Heart left ventricle (tissue), 16 donors: ENCODE measurements at regions of chr2 and their contacts with region 1.

Region 1: GRCh38 chr2:112433932-112434730 is 686 bp upstream of the RGPD8 start:
- DNase-seq: no peak
- ATAC-seq: no peak
- H3K4me3 ChIP-seq: no peak overlapping the region
- H3K27ac ChIP-seq: no peak overlapping the region
- H3K4me1 ChIP-seq: peaks cover 0 to 10% (median 1%) of the 10 kb centered on the region in 12 donors
- H3K27me3 ChIP-seq: peaks cover 0 to 10% (median 0%) of the 10 kb centered on the region in 9 donors
- CTCF ChIP-seq: no peak
- POLR2A ChIP-seq: no peak

Region 2: GRCh38 chr2:112259509-112260294 is 174.4 kb before region 1 on chr2:
- intact Hi-C with region 1: loop called in 4 of 10 experiments (anchors 5 to 10 kb)
- DNase-seq: peak; percentile 76 to 86 (median 84)
- ATAC-seq: peak; percentile 44 to 74 (median 67)
- H3K4me3 ChIP-seq: peak overlapping the region in 5 of 12 donors; percentile 14 to 32 (median 23)
- H3K27ac ChIP-seq: peak overlapping the region in 1 of 12 donors; percentile 37
- H3K4me1 ChIP-seq: peaks cover 0 to 22% (median 5%) of the 10 kb centered on the region in 12 donors
- H3K27me3 ChIP-seq: no peaks in the 10 kb centered on the region
- CTCF ChIP-seq: peak in 11 of 12 donors; percentile 87 to 98 (median 95)
- POLR2A ChIP-seq: no peak

Region 3: DNA sequence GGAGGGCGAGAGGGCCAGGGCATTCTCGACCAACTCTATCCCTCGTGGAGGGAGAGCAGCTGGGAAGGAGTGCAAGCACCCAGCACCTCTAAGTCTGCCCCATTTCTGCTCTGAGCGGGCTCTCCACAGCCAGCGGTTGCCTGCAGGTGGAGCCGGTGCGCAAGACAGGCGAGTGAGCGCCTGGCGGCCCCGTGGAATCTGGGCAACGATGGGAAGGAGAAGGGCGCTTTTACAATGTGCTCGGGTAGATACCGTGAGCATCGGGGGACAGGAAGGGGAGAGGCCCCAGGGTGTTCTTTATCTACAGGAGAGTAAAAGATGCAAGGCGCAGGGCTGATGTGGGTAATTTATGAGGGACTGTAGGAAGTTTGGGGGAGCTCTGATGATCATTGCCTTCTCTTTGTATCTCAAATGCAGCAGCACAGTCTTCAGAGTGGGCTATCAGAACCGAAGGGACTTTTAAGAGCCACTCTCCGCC is 47.0 kb after region 1 on chr2:
- intact Hi-C with region 1: no loop called
- DNase-seq: peak; percentile 83 to 92 (median 85)
- ATAC-seq: peak; percentile 85 to 93 (median 88)
- H3K4me3 ChIP-seq: peak overlapping the region; percentile 57 to 95 (median 72)
- H3K27ac ChIP-seq: peak overlapping the region; percentile 29 to 92 (median 88)
- H3K4me1 ChIP-seq: peaks cover 0 to 27% (median 19%) of the 10 kb centered on the region in 12 donors
- H3K27me3 ChIP-seq: no peaks in the 10 kb centered on the region
- CTCF ChIP-seq: peak; percentile 68 to 91 (median 78)
- POLR2A ChIP-seq: no peak

Region 4: DNA sequence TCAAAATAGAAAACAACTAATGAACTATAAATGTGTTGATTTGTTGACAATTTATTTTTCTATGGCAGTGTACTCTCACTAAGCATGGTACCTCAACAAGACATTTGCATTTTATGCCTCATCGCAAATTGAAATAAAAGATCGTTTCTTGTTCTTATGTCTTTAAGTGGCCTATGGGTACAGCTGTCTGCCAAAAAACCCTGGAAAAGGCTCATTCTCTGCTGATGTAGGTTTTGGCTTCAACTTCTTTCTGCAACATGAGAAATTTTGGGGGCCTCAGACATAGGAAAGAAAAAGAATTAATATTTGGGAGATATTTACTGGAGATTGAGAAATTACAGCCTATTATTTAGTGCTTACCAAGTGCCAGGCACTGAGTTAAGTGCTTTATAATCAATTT is 1803.2 kb after region 1 on chr2:
- intact Hi-C with region 1: no loop called
- DNase-seq: no peak
- ATAC-seq: no peak
- H3K4me3 ChIP-seq: no peak overlapping the region
- H3K27ac ChIP-seq: no peak overlapping the region
- H3K4me1 ChIP-seq: no peaks in the 10 kb centered on the region
- H3K27me3 ChIP-seq: no peaks in the 10 kb centered on the region
- CTCF ChIP-seq: no peak
- POLR2A ChIP-seq: no peak